PC-9 (cell line): ENCODE measurements at regions of chr19 and their contacts with region 1.

Region 1: GRCh38 chr19:7868676-7869452 is 5.3 kb downstream of the PRR36 start:
- DNase-seq: peak; percentile 90 to 94
- H3K4me3 ChIP-seq: peak overlapping the region; percentile 70
- H3K27ac ChIP-seq: no peak overlapping the region
- H3K4me1 ChIP-seq: peaks cover 25% of the 10 kb centered on the region
- H3K27me3 ChIP-seq: no peaks in the 10 kb centered on the region
- CTCF ChIP-seq: peak; percentile 73

Region 2: GRCh38 chr19:7540761-7541491 is 327.9 kb before region 1 on chr19:
- CTCF ChIA-PET with region 1: no interaction called
- POLR2A ChIA-PET with region 1: interaction called, 18 read pairs
- intact Hi-C with region 1: no loop called
- DNase-seq: no peak
- H3K4me3 ChIP-seq: no peak overlapping the region
- H3K27ac ChIP-seq: no peak overlapping the region
- H3K4me1 ChIP-seq: no peaks in the 10 kb centered on the region
- H3K27me3 ChIP-seq: no peaks in the 10 kb centered on the region
- CTCF ChIP-seq: no peak

Region 3: DNA sequence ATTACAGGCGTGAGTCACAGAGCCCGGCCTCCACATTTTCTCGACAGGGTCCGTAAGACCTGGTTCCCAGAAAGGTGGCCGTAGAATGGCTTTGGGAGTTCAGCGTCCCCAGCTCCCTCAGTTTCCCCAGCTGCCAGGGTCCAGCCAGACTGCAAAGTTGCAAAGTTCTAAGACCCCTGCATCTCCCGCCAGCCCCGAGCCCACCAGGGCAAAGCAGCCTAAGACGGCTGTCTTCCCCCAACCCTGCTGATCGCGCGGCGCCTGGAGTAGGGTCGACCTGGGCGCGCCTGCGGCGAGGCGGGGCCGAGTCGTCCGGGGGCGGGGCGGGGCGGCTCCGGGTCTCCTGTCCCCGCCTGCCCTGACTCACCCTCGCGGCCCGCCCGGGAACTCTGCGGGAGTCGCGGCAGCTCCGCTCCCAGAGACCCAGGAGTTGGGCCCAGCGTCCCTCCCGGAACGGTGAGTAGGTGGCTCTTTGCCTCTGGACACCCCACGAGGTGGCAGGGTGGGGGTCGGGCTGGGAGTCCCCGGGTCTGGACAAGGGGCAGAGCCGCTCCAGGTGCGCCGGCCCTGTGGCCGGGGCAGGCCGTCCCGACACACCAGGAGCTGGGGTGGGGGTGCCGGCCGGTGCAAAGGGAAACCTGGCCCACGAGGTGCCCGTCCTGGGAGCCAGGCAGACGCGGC is 19.4 kb after region 1 on chr19 and contains the start of gene LRRC8E:
- CTCF ChIA-PET with region 1: interaction called, 3 read pairs
- POLR2A ChIA-PET with region 1: no interaction called
- intact Hi-C with region 1: loop called (anchors 2 kb)
- DNase-seq: peak; percentile 61 to 86
- H3K4me3 ChIP-seq: peak within 1 kb of the TSS; percentile 87
- H3K27ac ChIP-seq: 0 out of 2 replicates have a peak within 1 kb of the TSS, but pooled peaks have one; percentile 5
- H3K4me1 ChIP-seq: peaks cover 26% of the 10 kb centered on the region
- H3K27me3 ChIP-seq: no peaks in the 10 kb centered on the region
- CTCF ChIP-seq: no peak
- total RNA-seq, gene LRRC8E: 24.1 and 24.4 TPM in 2 replicates

Region 4: GRCh38 chr19:7919610-7920518 is 51.0 kb after region 1 on chr19 and contains the start of gene SNAPC2:
- CTCF ChIA-PET with region 1: interaction called, 20 read pairs
- POLR2A ChIA-PET with region 1: interaction called, 13 read pairs
- intact Hi-C with region 1: loop called (anchors 2 kb)
- DNase-seq: peak; percentile 85 to 97
- H3K4me3 ChIP-seq: peak within 1 kb of the TSS; percentile 77
- H3K27ac ChIP-seq: peak within 1 kb of the TSS; percentile 46
- H3K4me1 ChIP-seq: peaks cover 23% of the 10 kb centered on the region
- H3K27me3 ChIP-seq: peaks cover 19% of the 10 kb centered on the region
- CTCF ChIP-seq: no peak
- total RNA-seq, gene SNAPC2: 37.5 and 42.1 TPM in 2 replicates

Region 5: GRCh38 chr19:7953060-7953459 is 84.2 kb after region 1 on chr19:
- CTCF ChIA-PET with region 1: no interaction called
- POLR2A ChIA-PET with region 1: no interaction called
- intact Hi-C with region 1: no loop called
- DNase-seq: no peak
- H3K4me3 ChIP-seq: no peak overlapping the region
- H3K27ac ChIP-seq: no peak overlapping the region
- H3K4me1 ChIP-seq: no peaks in the 10 kb centered on the region
- H3K27me3 ChIP-seq: no peaks in the 10 kb centered on the region
- CTCF ChIP-seq: no peak

Region 6: GRCh38 chr19:8592231-8593009 is 723.6 kb after region 1 on chr19:
- CTCF ChIA-PET with region 1: no interaction called
- POLR2A ChIA-PET with region 1: interaction called, 32 read pairs
- intact Hi-C with region 1: no loop called
- DNase-seq: peak in 1 of 2 experiments; percentile 41
- H3K4me3 ChIP-seq: no peak overlapping the region
- H3K27ac ChIP-seq: no peak overlapping the region
- H3K4me1 ChIP-seq: no peaks in the 10 kb centered on the region
- H3K27me3 ChIP-seq: peaks cover 77% of the 10 kb centered on the region
- CTCF ChIP-seq: no peak